ENCODE measurements at regions of chr1 and their contacts with region 1.

Region 1: GRCh38 chr1:153717330-153717729 is 10.5 kb upstream of the INTS3 start:
- DNase-seq: no peak
- H3K4me3 Mint-ChIP-seq: no peak overlapping the region
- H3K27ac Mint-ChIP-seq: no peak overlapping the region
- H3K4me1 Mint-ChIP-seq: peaks cover 5% of the 10 kb centered on the region
- H3K27me3 Mint-ChIP-seq: peaks cover 17% of the 10 kb centered on the region

Region 2: DNA sequence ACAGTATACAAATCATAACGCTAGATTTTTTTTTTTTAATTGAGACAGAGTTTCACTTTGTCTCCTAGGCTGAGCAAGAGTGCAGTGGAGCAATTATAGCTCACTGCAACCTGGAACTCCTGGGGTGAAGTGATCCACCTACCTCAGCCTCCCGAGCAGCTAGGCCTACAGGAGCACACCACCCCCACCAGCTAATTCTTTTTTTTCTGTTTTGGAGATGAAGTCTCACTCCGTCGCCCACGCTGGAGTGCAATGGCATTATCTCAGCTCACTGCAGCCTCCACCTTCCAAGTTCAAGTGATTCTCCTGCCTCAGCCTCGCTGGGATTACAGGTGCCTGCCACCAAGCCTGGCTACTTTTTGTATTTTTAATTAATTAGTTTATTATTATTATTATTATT is 17.6 kb before region 1 on chr1:
- intact Hi-C with region 1: loop called (anchors 1 kb)
- DNase-seq: no peak
- H3K4me3 Mint-ChIP-seq: no peak overlapping the region
- H3K27ac Mint-ChIP-seq: no peak overlapping the region
- H3K4me1 Mint-ChIP-seq: no peaks in the 10 kb centered on the region
- H3K27me3 Mint-ChIP-seq: no peaks in the 10 kb centered on the region